Activated T-helper 2 cell treated with anti-CD3 and anti-CD28 coated beads, Interferon-gamma antibody, Interleukin-2, Interleukin-4, amounts not matched to agents 10 μg/mL and 5 μg/mL and 100 μg/mL, durations not matched to agents 14 hours and 24 hours and 36 hours (primary cell): ENCODE measurements at regions of chr2 and their contacts with region 1.

Region 1: GRCh38 chr2:197113275-197113711 is 186.8 kb upstream of the PGAP1 start:
- DNase-seq: no peak
- H3K4me3 Mint-ChIP-seq: no peak overlapping the region
- H3K27ac Mint-ChIP-seq: no peak overlapping the region
- H3K4me1 Mint-ChIP-seq: peaks cover 27% of the 10 kb centered on the region
- H3K27me3 Mint-ChIP-seq: no peaks in the 10 kb centered on the region

Region 2: DNA sequence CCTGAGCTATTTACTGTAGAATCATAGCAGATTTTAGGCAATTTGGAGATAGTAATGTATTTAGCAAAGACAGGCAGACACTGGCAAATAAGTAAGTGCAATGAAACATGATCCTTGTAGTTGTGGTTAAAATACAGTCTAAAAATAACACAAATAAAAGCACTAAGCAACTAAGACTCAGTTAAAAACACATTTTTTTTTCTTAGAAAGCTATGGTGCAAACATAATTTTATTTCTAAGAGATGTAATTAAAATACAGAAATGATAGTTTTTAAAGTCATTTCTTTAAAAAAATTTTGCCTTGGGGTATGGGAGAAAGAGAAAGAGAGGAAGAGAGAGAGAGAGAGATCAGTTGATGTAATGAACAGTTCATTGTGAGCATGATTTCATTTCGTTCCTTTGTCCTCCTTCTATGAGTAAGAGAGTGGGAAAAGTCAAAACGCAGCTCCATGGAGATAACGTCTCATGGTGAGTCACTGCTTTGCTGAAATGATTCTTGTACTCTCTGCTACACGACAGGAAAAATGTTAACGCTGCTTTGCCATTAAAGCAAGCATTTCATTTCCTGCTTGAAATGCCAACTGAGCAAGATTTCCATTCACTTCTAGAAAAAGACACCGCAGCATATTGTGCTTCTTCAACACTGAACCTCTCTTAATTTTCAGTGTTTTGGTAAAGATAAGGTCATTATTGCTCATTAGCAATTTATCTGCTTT is 125.5 kb before region 1 on chr2:
- intact Hi-C with region 1: no loop called
- DNase-seq: peak; percentile 35
- H3K4me3 Mint-ChIP-seq: peak overlapping the region; percentile 54
- H3K27ac Mint-ChIP-seq: peak overlapping the region; percentile 86
- H3K4me1 Mint-ChIP-seq: peaks cover 57% of the 10 kb centered on the region
- H3K27me3 Mint-ChIP-seq: no peaks in the 10 kb centered on the region

Region 3: DNA sequence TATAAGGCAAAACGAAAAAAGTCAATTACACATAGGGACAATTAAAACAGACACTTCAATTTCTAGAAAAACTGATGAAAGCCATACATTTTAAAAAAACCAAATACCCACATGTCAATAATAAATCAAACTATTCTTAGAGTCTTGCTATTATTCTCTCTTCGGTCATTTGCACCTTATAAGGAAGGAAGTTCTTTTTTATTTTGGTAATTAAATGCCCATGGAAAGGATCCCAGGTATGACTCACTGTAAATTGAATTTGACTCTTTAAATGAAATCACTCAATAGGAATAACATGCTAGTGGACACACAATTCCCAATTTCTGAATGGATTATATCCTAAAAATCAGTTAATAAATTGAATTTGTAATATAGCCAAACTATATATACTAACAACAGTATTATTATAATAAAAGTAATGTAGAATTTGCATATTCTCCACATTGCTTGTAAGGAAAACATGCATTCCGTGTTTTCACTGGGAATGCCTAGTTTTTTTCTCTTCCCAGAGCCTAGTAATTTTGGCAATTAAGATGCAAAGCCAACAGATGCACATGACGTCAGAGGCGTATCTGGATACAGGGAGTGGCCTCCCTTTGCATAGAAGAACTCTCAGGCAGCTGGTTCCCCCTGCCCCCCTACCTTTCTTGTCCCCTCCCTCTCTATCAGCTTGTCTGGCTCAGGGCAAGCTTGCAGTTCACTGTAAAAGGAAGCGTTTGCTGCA is 33.3 kb before region 1 on chr2:
- intact Hi-C with region 1: loop called (anchors 5 kb)
- DNase-seq: no peak
- H3K4me3 Mint-ChIP-seq: no peak overlapping the region
- H3K27ac Mint-ChIP-seq: no peak overlapping the region
- H3K4me1 Mint-ChIP-seq: no peaks in the 10 kb centered on the region
- H3K27me3 Mint-ChIP-seq: no peaks in the 10 kb centered on the region

Region 4: DNA sequence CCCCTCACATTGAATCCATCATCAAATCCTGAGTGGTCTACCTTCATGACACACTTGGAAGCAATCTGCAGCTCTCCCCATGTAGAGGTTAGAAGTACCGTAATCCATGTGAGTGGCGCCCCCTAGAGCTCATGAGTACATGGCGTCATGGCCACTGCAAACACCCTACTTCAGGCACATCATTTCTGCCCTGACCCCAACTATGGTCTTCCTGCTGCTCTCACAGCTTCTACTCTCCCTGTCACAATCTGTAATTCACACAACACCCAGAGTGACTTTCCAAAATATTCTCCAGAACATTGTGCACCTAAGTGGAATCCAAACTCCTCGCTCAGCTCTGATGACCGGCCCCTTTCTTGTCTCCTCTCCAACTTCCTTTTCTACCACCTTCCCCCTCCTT is 55.4 kb after region 1 on chr2:
- intact Hi-C with region 1: loop called (anchors 1 kb)
- DNase-seq: peak; percentile 46
- H3K4me3 Mint-ChIP-seq: no peak overlapping the region
- H3K27ac Mint-ChIP-seq: peak overlapping the region; percentile 67
- H3K4me1 Mint-ChIP-seq: peaks cover 31% of the 10 kb centered on the region
- H3K27me3 Mint-ChIP-seq: no peaks in the 10 kb centered on the region